AG04450 (cell line): ENCODE measurements at regions of chr3 and their contacts with region 1.

Region 1: GRCh38 chr3:66938338-66938963 is 59.7 kb upstream of the KBTBD8 start:
- DNase-seq: peak; percentile 24
- H3K4me3 ChIP-seq: no peak overlapping the region
- H3K27ac ChIP-seq: no peak overlapping the region
- H3K27me3 ChIP-seq: no peaks in the 10 kb centered on the region
- CTCF ChIP-seq: peak; percentile 87

Region 2: GRCh38 chr3:66910266-66911055 is 28.0 kb before region 1 on chr3:
- CTCF ChIA-PET with region 1: interaction called, 10 read pairs
- POLR2A ChIA-PET with region 1: no interaction called
- DNase-seq: no peak
- H3K4me3 ChIP-seq: no peak overlapping the region
- H3K27ac ChIP-seq: no peak overlapping the region
- H3K27me3 ChIP-seq: peaks cover 9% of the 10 kb centered on the region
- CTCF ChIP-seq: no peak

Region 3: DNA sequence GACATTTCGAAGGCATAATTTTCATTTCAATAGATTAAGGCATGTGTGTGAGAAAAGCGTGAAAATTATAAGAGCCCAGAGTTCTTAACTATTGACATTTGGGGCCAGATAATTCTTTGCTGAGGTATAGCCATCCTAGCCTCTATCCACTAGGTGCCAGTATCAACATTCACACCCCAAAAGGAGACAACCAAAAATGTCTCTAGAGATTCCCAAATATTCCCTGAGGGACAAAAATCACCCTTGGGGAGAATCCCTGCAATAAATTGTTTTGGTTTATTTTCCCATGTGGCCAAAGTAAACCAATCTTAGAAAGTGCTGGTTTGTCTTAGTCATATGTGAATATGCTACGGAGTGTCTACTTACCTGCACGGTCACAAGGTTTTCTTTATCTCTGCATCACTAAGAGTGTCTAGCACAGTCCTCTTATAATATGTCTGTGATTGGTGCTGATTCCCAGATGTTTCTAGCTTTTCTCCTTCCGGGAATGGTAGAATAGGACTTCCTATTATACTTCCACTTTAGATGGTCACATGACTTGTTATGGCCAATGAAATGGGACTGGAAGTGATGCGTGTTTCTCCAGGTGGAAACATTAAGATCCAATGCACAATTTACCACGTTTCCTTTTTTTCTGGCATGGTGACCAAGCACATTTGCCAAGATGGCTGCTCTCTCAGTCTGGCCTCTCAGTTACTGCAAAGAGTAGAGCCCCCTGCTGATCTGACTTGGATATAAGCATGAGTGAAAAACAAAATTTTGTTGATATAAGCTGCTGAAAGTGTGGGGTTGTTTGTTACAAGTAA is 51.6 kb after region 1 on chr3:
- CTCF ChIA-PET with region 1: interaction called, 11 read pairs
- POLR2A ChIA-PET with region 1: no interaction called
- DNase-seq: no peak
- H3K4me3 ChIP-seq: no peak overlapping the region
- H3K27ac ChIP-seq: no peak overlapping the region
- H3K27me3 ChIP-seq: no peaks in the 10 kb centered on the region
- CTCF ChIP-seq: peak; percentile 30

Region 4: GRCh38 chr3:67037615-67038014 is 99.2 kb after region 1 on chr3:
- CTCF ChIA-PET with region 1: interaction called, 17 read pairs
- POLR2A ChIA-PET with region 1: no interaction called
- DNase-seq: no peak
- H3K4me3 ChIP-seq: no peak overlapping the region
- H3K27ac ChIP-seq: no peak overlapping the region
- H3K27me3 ChIP-seq: no peaks in the 10 kb centered on the region
- CTCF ChIP-seq: no peak

Region 5: GRCh38 chr3:68876112-68876713 is 1937.8 kb after region 1 on chr3:
- CTCF ChIA-PET with region 1: interaction called, 47 read pairs
- POLR2A ChIA-PET with region 1: no interaction called
- DNase-seq: peak; percentile 39
- H3K4me3 ChIP-seq: no peak overlapping the region
- H3K27ac ChIP-seq: no peak overlapping the region
- H3K27me3 ChIP-seq: peaks cover 3% of the 10 kb centered on the region
- CTCF ChIP-seq: peak; percentile 92